Gastrocnemius medialis (tissue), 4 donors: ENCODE measurements at regions of chr12 and their contacts with region 1.

Region 1: GRCh38 chr12:3275171-3276041 is 198.2 kb downstream of the TSPAN9 start:
- DNase-seq: peak; percentile 47 to 64
- ATAC-seq: peak; percentile 76 to 83
- H3K4me3 ChIP-seq: no peak overlapping the region
- H3K27ac ChIP-seq: no peak overlapping the region
- H3K4me1 ChIP-seq: peaks cover 8 to 9% of the 10 kb centered on the region in 2 donors
- H3K27me3 ChIP-seq: no peaks in the 10 kb centered on the region
- CTCF ChIP-seq: peak; percentile 90 to 100 (median 97)
- POLR2A ChIP-seq: no peak

Region 2: DNA sequence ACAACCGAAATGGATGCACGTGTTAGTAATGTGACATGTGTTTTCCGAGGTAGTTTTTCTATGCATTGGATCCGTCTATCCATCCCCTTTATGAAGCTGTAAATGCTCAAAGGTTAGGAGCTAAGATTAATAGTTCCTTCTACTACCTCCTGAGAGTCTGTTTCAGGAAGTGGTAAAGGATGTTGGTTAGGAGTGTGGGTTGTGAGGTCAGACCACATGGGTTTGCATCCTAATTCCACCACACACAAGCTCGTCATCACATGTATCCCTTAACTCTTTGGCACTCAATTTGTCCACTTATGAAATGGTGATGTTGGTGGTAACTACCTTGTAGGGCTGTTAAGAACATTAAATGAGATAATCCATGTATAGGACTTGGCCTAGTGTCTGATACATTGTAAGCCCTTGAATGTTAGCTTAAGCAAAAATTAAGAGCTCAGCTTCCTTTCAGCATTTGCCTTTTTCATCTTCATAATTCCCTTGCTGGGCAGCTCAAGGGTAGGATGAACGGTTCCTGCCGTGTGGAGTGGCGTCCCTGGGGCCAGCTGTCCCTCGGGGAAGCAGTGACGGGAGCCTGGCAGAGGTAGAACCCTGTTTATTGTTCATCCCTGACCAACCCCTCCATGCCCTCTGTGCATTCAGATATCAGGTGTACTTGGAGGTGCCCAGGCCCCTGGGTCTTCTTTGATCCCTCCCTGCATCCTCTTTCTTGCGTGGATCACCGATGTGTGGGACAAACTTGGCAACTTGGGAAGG is 145.9 kb before region 1 on chr12:
- in situ Hi-C with region 1: loop called in 1 of 4 experiments (anchors 5 kb)
- intact Hi-C with region 1: no loop called
- DNase-seq: no peak
- ATAC-seq: peak in 1 of 2 donors; percentile 9
- H3K4me3 ChIP-seq: peak overlapping the region; percentile 11 to 50 (median 33)
- H3K27ac ChIP-seq: peak overlapping the region; percentile 5 to 58 (median 44)
- H3K4me1 ChIP-seq: peaks cover 20 to 29% of the 10 kb centered on the region in 2 donors
- H3K27me3 ChIP-seq: no peaks in the 10 kb centered on the region
- CTCF ChIP-seq: no peak
- POLR2A ChIP-seq: no peak

Region 3: DNA sequence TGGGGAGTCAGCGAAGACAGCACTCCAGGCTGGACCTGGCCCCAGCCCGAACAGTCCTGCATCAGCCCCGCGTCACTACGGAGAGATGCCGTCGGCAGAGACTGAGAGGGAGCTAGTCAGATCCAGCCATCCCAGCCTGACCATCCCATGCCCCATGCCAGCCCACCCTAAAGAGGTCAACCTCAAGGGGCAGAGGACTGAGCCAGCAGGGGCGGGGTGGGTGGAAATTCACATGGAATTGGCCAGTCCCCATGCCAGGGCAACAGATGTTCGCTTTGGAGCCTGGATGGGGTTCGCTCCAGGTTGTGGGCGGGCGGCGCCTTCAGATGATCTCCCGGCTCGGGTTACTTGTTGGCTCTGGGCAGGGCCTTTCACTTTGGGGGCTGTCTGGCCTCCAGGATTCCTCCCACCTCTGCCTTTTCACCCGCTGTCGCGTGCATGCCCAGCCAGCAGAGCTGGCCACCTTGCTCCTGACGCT is 44.0 kb before region 1 on chr12:
- in situ Hi-C with region 1: no loop called
- intact Hi-C with region 1: loop called (anchors 5 kb)
- DNase-seq: peak; percentile 17 to 74
- ATAC-seq: peak; percentile 59 to 79
- H3K4me3 ChIP-seq: peak overlapping the region in 1 of 4 donors; percentile 21
- H3K27ac ChIP-seq: peak overlapping the region; percentile 44 to 72 (median 66)
- H3K4me1 ChIP-seq: peaks cover 23 to 34% of the 10 kb centered on the region in 2 donors
- H3K27me3 ChIP-seq: no peaks in the 10 kb centered on the region
- CTCF ChIP-seq: no peak
- POLR2A ChIP-seq: no peak

Region 4: DNA sequence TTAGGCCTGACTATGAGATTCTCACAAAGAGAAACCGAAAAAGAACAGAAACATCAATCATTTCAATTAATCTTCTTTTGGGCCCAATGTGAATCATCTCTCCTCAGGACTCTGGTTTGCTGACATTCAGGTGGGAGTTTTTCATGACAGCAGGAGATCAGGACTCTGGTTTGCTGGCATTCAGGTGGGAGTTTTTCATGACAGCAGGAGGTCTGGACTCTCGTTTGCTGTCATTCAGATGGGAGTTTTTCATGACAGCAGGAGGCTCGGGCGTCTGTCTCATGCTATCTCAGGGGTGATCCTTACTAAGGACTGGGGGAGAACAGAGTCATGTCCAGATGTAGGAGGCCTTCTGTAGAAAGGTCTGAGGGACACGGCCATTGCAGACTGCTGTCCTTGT is 637.9 kb after region 1 on chr12:
- in situ Hi-C with region 1: no loop called
- intact Hi-C with region 1: no loop called
- DNase-seq: no peak
- ATAC-seq: no peak
- H3K4me3 ChIP-seq: no peak overlapping the region
- H3K27ac ChIP-seq: no peak overlapping the region
- H3K4me1 ChIP-seq: no peaks in the 10 kb centered on the region
- H3K27me3 ChIP-seq: no peaks in the 10 kb centered on the region
- CTCF ChIP-seq: no peak
- POLR2A ChIP-seq: no peak